Transverse colon (tissue), 4 donors: ENCODE measurements at regions of chr17 and their contacts with region 1.

Region 1: GRCh38 chr17:199806-200540 is 18.5 kb upstream of the DOC2B start:
- DNase-seq: no peak
- H3K4me3 ChIP-seq: no peak overlapping the region
- H3K27ac ChIP-seq: no peak overlapping the region
- H3K4me1 ChIP-seq: peaks cover 0 to 9% (median 0%) of the 10 kb centered on the region in 4 donors
- H3K27me3 ChIP-seq: peaks cover 16% of the 10 kb centered on the region
- CTCF ChIP-seq: no peak
- EP300 ChIP-seq: no peak
- POLR2A ChIP-seq: no peak

Region 2: GRCh38 chr17:177762-178161 is 22.2 kb before region 1 on chr17:
- in situ Hi-C with region 1: no loop called
- intact Hi-C with region 1: loop called (anchors 2 kb)
- DNase-seq: no peak
- H3K4me3 ChIP-seq: no peak overlapping the region
- H3K27ac ChIP-seq: no peak overlapping the region
- H3K4me1 ChIP-seq: peaks cover 5 to 14% (median 13%) of the 10 kb centered on the region in 4 donors
- H3K27me3 ChIP-seq: peaks cover 63% of the 10 kb centered on the region
- CTCF ChIP-seq: no peak
- EP300 ChIP-seq: no peak
- POLR2A ChIP-seq: no peak

Region 3: GRCh38 chr17:247767-248166 is 47.8 kb after region 1 on chr17:
- in situ Hi-C with region 1: no loop called
- intact Hi-C with region 1: no loop called
- DNase-seq: peak; percentile 7
- H3K4me3 ChIP-seq: no peak overlapping the region
- H3K27ac ChIP-seq: no peak overlapping the region
- H3K4me1 ChIP-seq: peaks cover 0 to 8% (median 3%) of the 10 kb centered on the region in 4 donors
- H3K27me3 ChIP-seq: no peaks in the 10 kb centered on the region
- CTCF ChIP-seq: no peak
- EP300 ChIP-seq: no peak
- POLR2A ChIP-seq: no peak

Region 4: DNA sequence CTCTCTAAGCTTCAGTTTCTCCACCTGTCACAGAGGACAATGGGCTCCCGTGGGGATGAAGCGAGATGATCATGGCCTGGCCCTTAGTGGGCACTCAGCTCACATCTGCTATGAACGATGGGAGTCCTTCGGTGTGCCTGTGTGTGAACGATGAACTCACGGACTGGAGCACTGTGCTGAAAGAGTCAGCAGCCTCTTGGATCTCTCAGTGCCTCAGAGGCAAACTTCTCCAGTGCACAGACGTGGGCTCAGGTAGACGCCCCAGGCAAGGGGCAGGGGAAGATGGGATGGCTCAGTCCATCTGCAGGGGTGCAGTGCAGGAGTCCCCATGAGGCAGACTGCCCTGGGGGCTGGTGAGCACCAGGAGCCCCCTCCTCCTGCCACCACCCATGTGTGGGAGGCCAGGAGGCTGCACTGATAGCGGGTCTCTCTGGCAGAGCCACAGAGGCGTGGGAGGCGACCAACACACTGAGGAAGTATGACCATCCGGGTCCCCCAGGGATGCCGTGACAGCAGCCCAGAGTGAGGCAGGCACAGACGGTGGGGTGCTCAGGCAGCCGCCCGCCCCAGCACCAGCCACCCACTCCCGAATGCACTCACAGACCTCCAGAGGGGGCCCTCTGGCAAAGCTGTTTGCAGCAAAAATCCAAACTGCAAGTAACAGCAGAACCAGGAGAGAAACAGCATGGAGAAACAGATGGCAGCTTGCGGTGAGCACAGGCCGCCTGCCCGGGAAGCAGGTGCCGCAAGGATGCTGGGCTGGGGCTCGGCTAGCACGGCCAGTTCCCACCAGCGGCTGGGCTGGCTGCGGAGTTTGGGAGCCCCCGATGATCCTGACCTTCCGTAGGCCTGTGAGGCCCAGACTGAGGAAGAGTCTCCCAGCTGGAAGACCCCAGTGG is 69.9 kb after region 1 on chr17:
- in situ Hi-C with region 1: no loop called
- intact Hi-C with region 1: no loop called
- DNase-seq: no peak
- H3K4me3 ChIP-seq: no peak overlapping the region
- H3K27ac ChIP-seq: no peak overlapping the region
- H3K4me1 ChIP-seq: no peaks in the 10 kb centered on the region
- H3K27me3 ChIP-seq: no peaks in the 10 kb centered on the region
- CTCF ChIP-seq: no peak
- EP300 ChIP-seq: no peak
- POLR2A ChIP-seq: no peak